ENCODE measurements at regions of chr17 and their contacts with region 1.

Region 1: DNA sequence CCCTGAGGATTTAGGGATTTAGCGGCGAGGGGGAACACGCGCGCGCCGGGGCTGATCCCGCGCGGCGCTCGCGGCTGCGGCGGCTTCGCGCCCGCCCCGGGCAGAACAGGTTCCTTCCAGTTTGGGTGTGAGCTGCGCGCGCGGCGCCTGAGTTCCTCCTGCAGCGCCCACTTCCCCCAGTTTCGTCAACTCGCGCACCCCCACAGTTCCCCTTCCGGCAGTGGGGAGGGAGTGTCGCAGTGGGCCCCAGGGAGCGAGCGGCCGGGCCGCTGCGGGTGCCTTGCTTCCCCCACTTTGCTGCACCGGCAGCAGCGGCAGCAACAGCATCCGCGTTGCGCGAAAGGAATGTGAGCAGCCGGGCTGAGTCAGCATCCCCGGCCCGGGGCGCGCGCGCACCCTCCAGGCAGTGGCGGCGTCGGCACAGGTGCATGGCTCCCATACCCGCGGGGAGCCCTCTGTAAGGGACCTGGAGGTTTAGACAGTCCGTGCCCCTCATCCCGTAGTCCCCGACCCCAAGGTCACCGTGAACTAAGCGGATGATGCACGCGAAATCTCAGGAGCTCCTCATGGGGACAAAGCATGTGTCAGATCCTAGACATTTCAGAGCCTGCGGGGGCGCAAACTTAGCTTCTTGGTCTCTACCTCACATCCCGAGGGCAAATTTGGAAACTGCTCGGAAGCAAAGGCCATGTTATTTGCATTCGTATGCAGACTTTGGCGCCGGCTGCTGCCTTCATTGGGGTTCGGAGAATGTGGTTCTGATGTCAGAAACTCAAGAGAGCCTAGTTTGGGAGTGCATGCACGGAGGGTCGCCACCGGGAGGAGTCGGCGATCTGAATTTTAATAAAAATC is 775 bp downstream of the ARSG start:
- DNase-seq: peak; percentile 92
- H3K4me3 Mint-ChIP-seq: peak overlapping the region; percentile 81
- H3K27ac Mint-ChIP-seq: peak overlapping the region; percentile 84
- H3K4me1 Mint-ChIP-seq: peaks cover 60% of the 10 kb centered on the region
- H3K27me3 Mint-ChIP-seq: no peaks in the 10 kb centered on the region

Region 2: DNA sequence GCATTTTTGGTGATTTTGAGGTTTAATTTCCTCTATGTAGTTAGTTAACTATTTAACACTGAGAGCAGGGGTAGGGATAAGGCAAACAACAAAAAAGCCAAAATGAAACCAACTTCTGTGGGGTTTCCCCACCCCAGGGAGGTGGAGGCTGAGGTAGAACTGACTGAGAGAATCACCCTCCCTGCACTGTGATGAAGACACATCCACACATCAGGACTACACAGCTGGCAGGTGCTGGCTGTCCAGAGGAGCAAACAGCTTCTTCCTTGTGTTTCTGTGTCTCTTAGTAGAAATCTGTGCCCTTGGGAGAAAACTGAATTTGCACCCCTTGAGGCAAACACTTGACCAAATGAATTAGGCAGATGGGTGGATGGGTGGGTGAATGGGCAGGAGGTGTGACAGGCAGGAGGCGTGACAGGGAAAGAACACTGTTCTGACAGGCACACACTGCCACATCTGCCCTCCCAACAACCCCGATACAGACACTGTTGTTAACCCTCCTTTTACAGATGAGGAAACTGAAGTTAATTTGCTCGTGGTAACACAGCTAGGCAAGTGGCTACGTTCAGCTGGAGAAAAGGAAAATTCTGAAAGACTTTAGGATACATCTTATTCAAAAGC is 107.1 kb before region 1 on chr17:
- intact Hi-C with region 1: loop called (anchors 5 kb)
- DNase-seq: peak; percentile 67
- H3K4me3 Mint-ChIP-seq: peak overlapping the region; percentile 37
- H3K27ac Mint-ChIP-seq: peak overlapping the region; percentile 83
- H3K4me1 Mint-ChIP-seq: peaks cover 53% of the 10 kb centered on the region
- H3K27me3 Mint-ChIP-seq: no peaks in the 10 kb centered on the region

Region 3: DNA sequence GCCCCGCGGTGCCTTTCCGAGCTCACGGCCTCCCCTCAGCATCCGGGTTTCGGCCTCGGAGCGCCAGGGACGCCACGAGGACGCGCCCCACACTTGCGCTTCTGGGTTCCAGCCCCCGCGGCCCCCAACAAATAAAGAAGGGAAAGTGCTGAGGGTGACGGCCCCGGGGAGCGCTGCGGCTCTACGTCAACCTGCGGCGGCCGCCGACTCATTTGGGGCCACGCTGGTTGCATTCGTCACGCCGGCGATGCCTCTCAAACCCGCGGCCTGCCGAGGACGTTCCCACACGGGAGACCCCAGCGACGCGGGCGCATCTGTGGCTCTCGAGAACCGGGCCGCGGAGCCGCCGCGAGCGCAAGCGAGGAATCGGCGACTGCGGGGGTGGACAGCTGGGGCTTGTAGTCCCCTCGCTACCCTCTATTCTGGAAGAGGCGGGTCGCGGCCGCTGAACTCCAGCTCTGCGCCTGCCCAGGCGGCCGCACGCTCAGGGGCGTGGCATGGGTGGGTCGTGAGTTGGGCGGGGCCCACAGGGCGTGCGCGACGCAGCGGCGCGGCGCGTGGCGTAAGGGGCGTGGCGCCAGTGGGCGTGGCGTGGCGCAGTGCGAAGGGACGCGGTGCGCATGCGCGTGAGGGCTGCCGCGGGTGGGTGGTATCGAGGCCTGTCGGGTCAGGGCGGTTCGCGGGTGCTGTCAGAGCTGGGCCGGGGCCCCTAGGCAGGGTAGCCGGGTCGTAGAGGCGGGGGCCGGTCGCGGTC is 44.4 kb before region 1 on chr17 and contains the start of gene AMZ2:
- intact Hi-C with region 1: loop called (anchors 5 kb)
- DNase-seq: peak; percentile 97
- H3K4me3 Mint-ChIP-seq: peak within 1 kb of the TSS; percentile 91
- H3K27ac Mint-ChIP-seq: peak within 1 kb of the TSS; percentile 94
- H3K4me1 Mint-ChIP-seq: peaks cover 39% of the 10 kb centered on the region
- H3K27me3 Mint-ChIP-seq: no peaks in the 10 kb centered on the region
- total RNA-seq, gene AMZ2: 85.9 and 111 TPM in 2 replicates

Region 4: GRCh38 chr17:68346448-68346847 is 54.4 kb after region 1 on chr17:
- intact Hi-C with region 1: loop called (anchors 1 kb)
- DNase-seq: peak; percentile 67
- H3K4me3 Mint-ChIP-seq: peak overlapping the region; percentile 59
- H3K27ac Mint-ChIP-seq: peak overlapping the region; percentile 95
- H3K4me1 Mint-ChIP-seq: peaks cover 65% of the 10 kb centered on the region
- H3K27me3 Mint-ChIP-seq: no peaks in the 10 kb centered on the region

Region 5: GRCh38 chr17:68368387-68368786 is 76.3 kb after region 1 on chr17:
- intact Hi-C with region 1: no loop called
- DNase-seq: no peak
- H3K4me3 Mint-ChIP-seq: no peak overlapping the region
- H3K27ac Mint-ChIP-seq: no peak overlapping the region
- H3K4me1 Mint-ChIP-seq: no peaks in the 10 kb centered on the region
- H3K27me3 Mint-ChIP-seq: no peaks in the 10 kb centered on the region

Region 6: DNA sequence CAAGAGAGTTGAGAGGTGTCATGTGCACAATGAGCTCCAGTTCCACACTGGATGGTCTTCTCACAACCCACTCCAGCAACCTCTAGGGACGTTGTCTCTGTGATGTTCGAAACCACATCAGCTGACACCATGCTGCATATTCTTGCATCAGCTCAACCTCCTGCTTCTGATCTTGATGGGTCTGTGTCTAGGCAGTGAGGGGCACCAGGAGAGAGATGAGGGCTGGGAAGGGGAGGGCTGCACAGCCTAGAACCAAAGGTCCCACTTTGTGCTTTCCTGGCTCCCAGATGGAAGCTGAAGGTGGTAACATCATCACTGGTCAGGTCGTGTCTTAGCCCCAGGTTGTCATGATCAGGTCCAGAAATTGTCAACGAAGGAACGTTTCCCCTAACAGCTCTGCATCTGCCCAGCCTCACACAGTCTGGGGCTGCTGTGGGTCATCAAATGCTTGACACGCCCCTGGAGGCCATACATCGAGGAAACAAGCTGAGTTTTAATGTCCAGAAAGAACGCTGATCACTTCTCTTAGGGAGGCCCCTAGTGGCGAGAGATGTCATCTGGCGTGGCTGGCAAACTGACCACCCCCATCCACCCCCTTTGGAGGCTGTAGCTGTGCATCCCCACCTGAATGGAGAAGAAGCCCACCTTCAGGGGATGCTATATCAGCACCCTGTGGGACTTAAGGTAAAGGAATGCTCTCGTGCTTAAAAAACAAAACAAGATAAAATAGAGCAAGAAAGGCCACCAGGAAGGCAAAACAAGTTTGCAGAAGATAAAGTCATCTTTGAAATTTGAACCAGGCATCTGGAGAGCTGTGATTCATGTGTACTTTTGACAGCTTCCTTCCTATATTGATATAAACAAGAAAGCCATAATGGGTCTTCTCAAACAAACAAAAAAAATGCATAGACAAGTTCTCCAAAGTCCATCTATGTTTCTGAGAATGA is 106.9 kb after region 1 on chr17:
- intact Hi-C with region 1: loop called (anchors 2 kb)
- DNase-seq: peak; percentile 19
- H3K4me3 Mint-ChIP-seq: peak overlapping the region; percentile 39
- H3K27ac Mint-ChIP-seq: peak overlapping the region; percentile 84
- H3K4me1 Mint-ChIP-seq: peaks cover 31% of the 10 kb centered on the region
- H3K27me3 Mint-ChIP-seq: no peaks in the 10 kb centered on the region